Brain microvascular endothelial cell (primary cell): ENCODE measurements at regions of chr3 and their contacts with region 1.

Region 1: DNA sequence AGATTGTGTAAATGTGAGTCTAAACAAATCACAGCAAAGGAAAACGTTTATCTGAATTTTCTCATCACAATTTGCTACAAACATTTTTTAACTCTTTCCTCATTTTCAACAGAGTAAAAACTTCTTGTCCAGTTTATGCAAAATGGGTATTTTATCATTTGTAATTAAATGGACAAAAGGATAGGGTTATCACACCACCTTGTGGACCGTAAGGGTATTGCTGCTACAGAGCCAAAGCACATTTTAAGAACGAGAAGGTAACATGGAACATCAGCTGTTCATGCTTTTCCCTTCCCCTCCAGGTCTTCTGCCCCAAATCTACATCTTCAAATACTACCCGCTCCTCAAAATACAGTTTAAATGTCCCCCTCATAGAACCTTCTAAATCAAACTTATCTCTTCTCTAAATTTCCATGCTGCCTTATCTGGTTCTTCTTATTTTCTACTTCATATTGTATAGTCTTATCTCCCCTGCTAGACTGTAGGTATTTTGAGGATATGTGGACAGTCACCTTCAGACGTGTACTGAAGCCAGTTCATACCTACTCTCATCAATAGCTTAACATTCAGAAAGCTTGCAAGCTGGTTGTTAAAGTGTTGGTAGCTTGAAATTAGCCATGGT is 12.8 kb upstream of the SETMAR start:
- DNase-seq: peak; percentile 54
- H3K4me3 ChIP-seq: no peak overlapping the region
- H3K27ac ChIP-seq: no peak overlapping the region
- H3K27me3 ChIP-seq: no peaks in the 10 kb centered on the region
- CTCF ChIP-seq: peak; percentile 75

Region 2: DNA sequence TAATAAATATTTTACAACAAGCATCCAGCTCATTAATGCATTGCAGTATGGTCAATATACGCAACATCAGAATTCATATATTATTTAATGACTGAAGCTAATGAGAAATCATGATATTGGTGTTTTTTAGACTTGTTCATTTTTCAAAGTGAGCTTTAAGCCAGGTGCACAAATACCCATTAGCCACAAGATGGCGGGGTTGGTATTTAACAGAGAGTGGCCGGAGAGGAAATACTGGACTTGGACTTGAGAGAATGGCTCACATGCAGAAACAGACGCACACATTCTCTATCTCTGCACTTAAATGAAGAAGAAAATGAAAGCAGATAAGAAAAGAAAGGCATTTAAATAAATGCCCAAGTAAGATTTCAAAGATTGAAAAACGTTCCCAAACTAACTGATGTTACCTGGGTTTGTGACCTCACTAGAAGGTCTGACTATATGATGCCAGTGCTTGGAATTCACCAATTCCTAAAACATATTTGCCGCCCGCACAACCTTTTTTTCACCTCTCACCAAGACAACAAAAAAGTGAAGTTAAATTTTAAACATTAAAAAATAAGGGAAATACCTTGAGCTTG is 1089.7 kb before region 1 on chr3:
- in situ Hi-C with region 1: loop called (anchors 25 kb)
- DNase-seq: peak; percentile 51
- H3K4me3 ChIP-seq: no peak overlapping the region
- H3K27ac ChIP-seq: no peak overlapping the region
- H3K27me3 ChIP-seq: no peaks in the 10 kb centered on the region
- CTCF ChIP-seq: peak; percentile 83